CD4-positive, alpha-beta memory T cell (primary cell): ENCODE measurements at regions of chr22 and their contacts with region 1.

Region 1: GRCh38 chr22:25081409-25081824 is 118.2 kb upstream of the CRYBB3 start:
- DNase-seq: peak; percentile 40 to 52 (median 44)
- H3K4me3 ChIP-seq: no peak overlapping the region
- H3K4me3 Mint-ChIP-seq: no peak overlapping the region
- H3K27ac ChIP-seq: no peak overlapping the region
- H3K27ac Mint-ChIP-seq: peak overlapping the region in 2 of 7 donors; percentile 24 to 30
- H3K4me1 ChIP-seq: peaks cover 26% of the 10 kb centered on the region
- H3K4me1 Mint-ChIP-seq: peaks cover 28 to 44% (median 31%) of the 10 kb centered on the region in 4 donors
- H3K27me3 ChIP-seq: no peaks in the 10 kb centered on the region
- H3K27me3 Mint-ChIP-seq: no peaks in the 10 kb centered on the region

Region 2: DNA sequence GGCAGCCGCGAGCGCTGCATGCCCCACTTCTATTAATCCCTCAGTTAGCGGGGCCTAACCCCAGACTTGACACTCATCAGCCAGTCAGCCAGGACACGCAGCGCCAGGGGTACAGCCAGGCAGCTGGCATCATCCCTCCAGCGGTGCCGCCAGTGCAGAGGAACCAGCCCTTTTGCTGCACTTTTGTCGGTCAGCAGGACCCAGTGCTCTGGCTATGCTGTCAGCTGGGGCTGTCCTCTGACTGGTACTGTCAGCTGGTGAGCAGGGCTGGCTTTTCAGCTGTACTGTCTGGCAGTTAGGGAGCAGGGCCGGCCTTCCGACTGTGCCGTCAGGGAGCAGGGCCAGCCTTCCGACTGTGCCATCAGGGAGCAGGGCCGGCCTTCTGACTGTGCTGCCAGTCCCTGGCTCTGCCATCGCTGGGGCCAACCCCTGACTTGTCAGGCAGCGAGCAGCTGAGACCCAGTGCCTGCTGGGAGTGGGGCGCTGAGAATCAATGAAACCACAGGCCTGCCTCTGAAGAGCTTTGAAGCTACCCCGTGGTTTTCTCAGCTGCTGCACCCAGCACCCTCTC is 13.5 kb before region 1 on chr22:
- CTCF ChIA-PET with region 1: interaction called, 58 read pairs
- POLR2A ChIA-PET with region 1: interaction called, 40 read pairs
- intact Hi-C with region 1: loop called (anchors 1 kb)
- DNase-seq: peak; percentile 91 to 95 (median 93)
- H3K4me3 ChIP-seq: no peak overlapping the region
- H3K4me3 Mint-ChIP-seq: peak overlapping the region; percentile 84 to 95 (median 90)
- H3K27ac ChIP-seq: peak overlapping the region; percentile 77
- H3K27ac Mint-ChIP-seq: peak overlapping the region; percentile 95 to 99 (median 97)
- H3K4me1 ChIP-seq: peaks cover 83% of the 10 kb centered on the region
- H3K4me1 Mint-ChIP-seq: peaks cover 57 to 91% (median 77%) of the 10 kb centered on the region in 4 donors
- H3K27me3 ChIP-seq: no peaks in the 10 kb centered on the region
- H3K27me3 Mint-ChIP-seq: no peaks in the 10 kb centered on the region

Region 3: DNA sequence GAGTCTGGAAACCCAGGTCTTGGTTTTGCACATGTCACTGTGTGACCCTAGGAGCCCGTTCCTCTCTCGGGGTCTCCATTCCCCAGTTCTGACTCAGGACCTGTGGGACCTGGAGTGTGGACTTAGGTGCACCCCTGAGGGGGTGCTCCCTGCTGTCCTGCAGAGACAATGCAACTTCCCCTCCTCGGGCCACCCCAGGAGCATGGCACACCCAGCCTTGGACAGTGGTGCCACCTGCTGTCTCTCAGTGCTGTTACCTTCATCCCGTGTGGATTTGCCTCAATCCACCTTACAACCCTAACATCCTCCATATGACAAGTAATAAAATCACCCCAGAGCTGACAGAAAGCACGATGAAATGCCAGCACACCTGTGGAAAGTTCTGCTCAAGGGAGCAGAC is 90.7 kb after region 1 on chr22:
- CTCF ChIA-PET with region 1: interaction called, 28 read pairs
- POLR2A ChIA-PET with region 1: no interaction called
- intact Hi-C with region 1: loop called (anchors 1 kb)
- DNase-seq: peak in 4 of 5 donors; percentile 7 to 22 (median 13)
- H3K4me3 ChIP-seq: no peak overlapping the region
- H3K4me3 Mint-ChIP-seq: no peak overlapping the region
- H3K27ac ChIP-seq: no peak overlapping the region
- H3K27ac Mint-ChIP-seq: no peak overlapping the region
- H3K4me1 ChIP-seq: no peaks in the 10 kb centered on the region
- H3K4me1 Mint-ChIP-seq: no peaks in the 10 kb centered on the region
- H3K27me3 ChIP-seq: no peaks in the 10 kb centered on the region
- H3K27me3 Mint-ChIP-seq: no peaks in the 10 kb centered on the region